Body of pancreas (tissue), 4 donors: ENCODE measurements at regions of chr4 and their contacts with region 1.

Region 1: GRCh38 chr4:82275431-82276331 is 98.1 kb downstream of the HNRNPD start:
- DNase-seq: no peak
- ATAC-seq: no peak
- H3K4me3 ChIP-seq: no peak overlapping the region
- H3K27ac ChIP-seq: no peak overlapping the region
- H3K4me1 ChIP-seq: no peaks in the 10 kb centered on the region
- H3K27me3 ChIP-seq: no peaks in the 10 kb centered on the region
- CTCF ChIP-seq: no peak
- POLR2A ChIP-seq: no peak

Region 2: GRCh38 chr4:81405894-81406401 is 869.7 kb before region 1 on chr4:
- intact Hi-C with region 1: loop called (anchors 10 kb)
- DNase-seq: peak; percentile 31 to 76 (median 62)
- ATAC-seq: peak; percentile 92
- H3K4me3 ChIP-seq: no peak overlapping the region
- H3K27ac ChIP-seq: no peak overlapping the region
- H3K4me1 ChIP-seq: peaks cover 11% of the 10 kb centered on the region
- H3K27me3 ChIP-seq: peaks cover 0 to 5% of the 10 kb centered on the region in 2 donors
- CTCF ChIP-seq: peak; percentile 45 to 91 (median 84)
- POLR2A ChIP-seq: no peak

Region 3: DNA sequence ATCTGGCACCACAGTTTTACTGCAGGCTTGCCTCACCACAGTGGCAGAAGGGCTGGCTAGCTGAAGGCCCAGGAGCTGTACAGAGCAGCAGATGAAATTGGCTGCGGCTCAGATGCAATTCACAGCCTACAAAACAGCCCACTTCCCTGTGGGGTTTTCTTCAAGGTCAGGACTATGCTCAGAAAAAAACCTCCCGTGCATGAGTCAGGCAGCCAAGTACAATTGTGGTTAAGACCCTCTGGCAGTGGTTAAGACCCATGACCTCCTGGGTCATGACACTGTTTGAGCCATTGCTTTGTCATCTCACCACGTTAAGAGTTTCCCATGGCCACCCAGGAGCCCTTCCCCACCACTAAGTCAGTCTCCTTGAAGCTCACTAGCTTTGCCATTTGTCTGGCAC is 178.2 kb before region 1 on chr4:
- intact Hi-C with region 1: no loop called
- DNase-seq: no peak
- ATAC-seq: no peak
- H3K4me3 ChIP-seq: no peak overlapping the region
- H3K27ac ChIP-seq: no peak overlapping the region
- H3K4me1 ChIP-seq: no peaks in the 10 kb centered on the region
- H3K27me3 ChIP-seq: no peaks in the 10 kb centered on the region
- CTCF ChIP-seq: no peak
- POLR2A ChIP-seq: no peak

Region 4: GRCh38 chr4:82555276-82555675 is 279.6 kb after region 1 on chr4:
- intact Hi-C with region 1: no loop called
- DNase-seq: no peak
- ATAC-seq: no peak
- H3K4me3 ChIP-seq: no peak overlapping the region
- H3K27ac ChIP-seq: no peak overlapping the region
- H3K4me1 ChIP-seq: no peaks in the 10 kb centered on the region
- H3K27me3 ChIP-seq: no peaks in the 10 kb centered on the region
- CTCF ChIP-seq: no peak
- POLR2A ChIP-seq: no peak